ENCODE measurements at regions of chr17 and their contacts with region 1.

Region 1: GRCh38 chr17:12667299-12667958 is 1.7 kb downstream of the MYOCD start:
- DNase-seq: peak; percentile 46 to 65
- H3K4me3 ChIP-seq: peak overlapping the region; percentile 15 to 52
- H3K27ac ChIP-seq: peak overlapping the region; percentile 89 to 92
- H3K4me1 ChIP-seq: no peaks in the 10 kb centered on the region
- H3K27me3 ChIP-seq: no peaks in the 10 kb centered on the region
- CTCF ChIP-seq: peak; percentile 61 to 82 (median 64)
- POLR2A ChIP-seq: no peak

Region 2: GRCh38 chr17:12256380-12256995 is 410.9 kb before region 1 on chr17:
- intact Hi-C with region 1: loop called (anchors 5 kb)
- DNase-seq: peak; percentile 45 to 56
- H3K4me3 ChIP-seq: no peak overlapping the region
- H3K27ac ChIP-seq: no peak overlapping the region
- H3K4me1 ChIP-seq: peaks cover 0 to 5% of the 10 kb centered on the region in 2 donors
- H3K27me3 ChIP-seq: no peaks in the 10 kb centered on the region
- CTCF ChIP-seq: peak; percentile 75 to 83 (median 78)
- POLR2A ChIP-seq: no peak

Region 3: GRCh38 chr17:12510535-12510934 is 156.9 kb before region 1 on chr17:
- intact Hi-C with region 1: no loop called
- DNase-seq: no peak
- H3K4me3 ChIP-seq: no peak overlapping the region
- H3K27ac ChIP-seq: peak overlapping the region; percentile 43 to 63
- H3K4me1 ChIP-seq: no peaks in the 10 kb centered on the region
- H3K27me3 ChIP-seq: no peaks in the 10 kb centered on the region
- CTCF ChIP-seq: no peak
- POLR2A ChIP-seq: no peak

Measured in uterus (tissue), 4 donors.